ENCODE measurements at regions of chr19 and their contacts with region 1.

Region 1: DNA sequence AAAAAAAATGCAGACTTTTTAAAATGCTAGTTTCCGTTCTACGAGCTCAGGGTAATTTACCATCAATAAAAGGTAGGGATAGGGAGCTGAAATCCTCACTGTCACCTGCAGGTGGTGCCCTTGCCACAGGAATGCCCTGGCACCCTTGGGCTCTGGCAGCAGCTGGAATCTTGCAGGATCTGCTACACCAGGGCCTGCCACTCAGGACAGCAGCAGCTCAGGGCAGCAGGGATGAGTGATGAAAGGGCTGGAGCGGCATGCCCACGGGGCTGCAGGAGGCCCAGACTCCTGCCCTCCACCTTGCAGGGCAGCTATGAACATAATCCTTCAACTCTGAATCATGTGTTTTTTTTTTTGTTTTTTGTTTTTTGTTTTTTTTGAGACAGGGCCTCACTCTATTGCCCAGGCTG is 54.0 kb downstream of the GNG7 start:
- DNase-seq: peak; percentile 75 to 81
- H3K4me3 ChIP-seq: no peak overlapping the region
- H3K27ac ChIP-seq: no peak overlapping the region
- H3K4me1 ChIP-seq: no peaks in the 10 kb centered on the region
- H3K27me3 ChIP-seq: no peaks in the 10 kb centered on the region
- CTCF ChIP-seq: peak; percentile 81 to 95 (median 89)
- POLR2A ChIP-seq: no peak

Region 2: GRCh38 chr19:2750808-2751443 is 102.4 kb after region 1 on chr19:
- intact Hi-C with region 1: loop called (anchors 10 kb)
- DNase-seq: no peak
- H3K4me3 ChIP-seq: no peak overlapping the region
- H3K27ac ChIP-seq: no peak overlapping the region
- H3K4me1 ChIP-seq: no peaks in the 10 kb centered on the region
- H3K27me3 ChIP-seq: no peaks in the 10 kb centered on the region
- CTCF ChIP-seq: no peak
- POLR2A ChIP-seq: no peak

Region 3: DNA sequence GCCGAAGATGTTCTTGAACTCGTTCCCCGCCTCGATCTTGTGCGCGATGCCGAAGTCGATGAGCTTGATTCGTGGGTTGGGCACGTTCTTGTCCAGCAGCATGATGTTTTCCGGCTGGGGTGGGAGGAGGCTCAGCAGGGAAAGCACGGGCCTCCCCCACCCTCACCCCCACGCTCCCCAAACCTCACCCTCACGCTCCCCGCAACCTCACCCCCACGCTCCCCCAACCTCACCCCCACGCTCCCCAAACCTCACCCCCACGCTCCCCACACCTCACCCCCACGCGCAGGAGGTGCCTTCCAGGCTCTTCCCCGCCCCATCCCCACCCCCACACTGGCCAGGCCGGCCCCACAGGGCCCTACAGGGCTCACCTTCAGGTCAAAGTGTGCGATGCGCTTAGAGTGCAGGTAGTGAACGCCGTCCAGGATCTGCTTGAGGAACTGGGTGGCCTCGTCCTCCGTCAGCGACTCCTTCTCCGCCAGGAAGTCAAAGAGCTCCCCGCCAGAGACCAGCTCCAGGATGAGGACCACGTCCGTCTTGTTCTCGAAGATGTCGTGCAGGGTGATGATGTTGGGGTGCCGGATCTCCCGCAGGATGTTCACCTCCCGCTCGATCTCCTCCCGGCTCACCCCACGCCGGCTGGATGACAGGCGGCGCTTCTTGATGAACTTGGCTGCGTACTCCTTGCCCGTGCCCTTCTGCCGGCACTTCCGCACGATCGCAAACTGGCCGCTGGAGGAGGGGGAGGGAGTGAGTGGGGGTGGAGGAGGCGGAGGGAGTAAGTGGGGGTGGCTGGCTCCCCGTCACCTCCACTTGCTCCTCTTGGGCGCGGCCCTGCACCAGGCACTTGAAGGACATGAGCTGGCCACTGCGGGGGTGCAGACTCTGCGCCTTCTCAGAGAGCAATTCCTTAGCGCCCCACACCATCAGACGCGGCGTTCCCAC is 1316.0 kb after region 1 on chr19:
- intact Hi-C with region 1: loop called (anchors 5 kb)
- DNase-seq: no peak
- H3K4me3 ChIP-seq: no peak overlapping the region
- H3K27ac ChIP-seq: no peak overlapping the region
- H3K4me1 ChIP-seq: peaks cover 6 to 13% of the 10 kb centered on the region in 2 donors
- H3K27me3 ChIP-seq: no peaks in the 10 kb centered on the region
- CTCF ChIP-seq: no peak
- POLR2A ChIP-seq: no peak

Measured in breast epithelium (tissue), 4 donors.